PC-9 (cell line): ENCODE measurements at regions of chr7 and their contacts with region 1.

Region 1: DNA sequence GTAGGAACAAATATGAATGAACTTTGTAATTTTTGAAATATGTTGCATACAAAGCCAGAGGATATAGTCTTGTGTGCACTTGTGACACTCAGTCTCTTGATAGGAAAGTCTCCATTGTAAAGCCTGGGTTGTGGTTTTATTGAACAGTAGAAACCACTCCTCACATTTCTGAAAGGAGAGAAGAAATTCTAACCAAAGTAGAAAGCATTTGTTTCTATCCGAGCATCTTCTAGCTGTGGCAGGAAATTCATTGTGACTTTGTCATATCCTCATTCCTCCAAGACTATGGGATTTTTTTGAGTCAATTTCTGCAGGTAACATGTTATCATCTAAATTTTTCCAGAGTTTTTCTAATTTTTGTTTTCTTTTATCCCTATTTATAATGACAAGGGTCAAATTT is 55.5 kb upstream of the NCF1 start:
- DNase-seq: no peak
- H3K4me3 ChIP-seq: no peak overlapping the region
- H3K27ac ChIP-seq: no peak overlapping the region
- H3K4me1 ChIP-seq: no peaks in the 10 kb centered on the region
- H3K27me3 ChIP-seq: no peaks in the 10 kb centered on the region
- CTCF ChIP-seq: no peak

Region 2: DNA sequence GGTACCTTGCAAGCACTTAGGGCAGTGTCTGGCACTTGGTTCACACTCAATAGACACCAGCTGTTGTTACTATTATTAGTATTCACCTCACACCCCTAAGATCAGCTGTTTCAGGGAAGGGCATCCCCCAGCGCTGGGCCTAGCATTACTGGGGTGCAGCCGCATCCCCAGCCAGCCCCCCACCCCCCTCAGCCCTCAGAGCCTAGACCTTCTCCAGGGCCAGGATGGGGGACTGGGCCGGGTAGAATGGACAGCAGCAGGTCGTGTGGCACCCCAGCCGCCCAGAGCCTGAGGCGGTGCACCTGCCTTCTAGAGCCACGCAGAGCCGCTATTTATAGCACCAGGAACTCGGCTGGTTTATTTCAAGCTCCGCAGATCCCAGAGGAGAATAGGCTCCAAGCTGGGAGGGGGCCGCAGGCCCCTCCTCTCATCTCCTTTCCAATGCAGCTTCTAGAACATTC is 204.2 kb before region 1 on chr7:
- CTCF ChIA-PET with region 1: no interaction called
- POLR2A ChIA-PET with region 1: no interaction called
- intact Hi-C with region 1: no loop called
- DNase-seq: no peak
- H3K4me3 ChIP-seq: no peak overlapping the region
- H3K27ac ChIP-seq: no peak overlapping the region
- H3K4me1 ChIP-seq: no peaks in the 10 kb centered on the region
- H3K27me3 ChIP-seq: no peaks in the 10 kb centered on the region
- CTCF ChIP-seq: no peak

Region 3: GRCh38 chr7:74544706-74545469 is 173.4 kb before region 1 on chr7:
- CTCF ChIA-PET with region 1: interaction called, 12 read pairs
- POLR2A ChIA-PET with region 1: no interaction called
- intact Hi-C with region 1: no loop called
- DNase-seq: no peak
- H3K4me3 ChIP-seq: no peak overlapping the region
- H3K27ac ChIP-seq: no peak overlapping the region
- H3K4me1 ChIP-seq: no peaks in the 10 kb centered on the region
- H3K27me3 ChIP-seq: no peaks in the 10 kb centered on the region
- CTCF ChIP-seq: peak; percentile 66

Region 4: GRCh38 chr7:74674166-74674565 is 44.2 kb before region 1 on chr7:
- CTCF ChIA-PET with region 1: no interaction called
- POLR2A ChIA-PET with region 1: interaction called, 18 read pairs
- intact Hi-C with region 1: no loop called
- DNase-seq: peak in 1 of 2 experiments; percentile 10
- H3K4me3 ChIP-seq: no peak overlapping the region
- H3K27ac ChIP-seq: no peak overlapping the region
- H3K4me1 ChIP-seq: no peaks in the 10 kb centered on the region
- H3K27me3 ChIP-seq: no peaks in the 10 kb centered on the region
- CTCF ChIP-seq: no peak